Left ventricle myocardium superior (tissue), 1 donor: ENCODE measurements at regions of chr12 and their contacts with region 1.

Region 1: DNA sequence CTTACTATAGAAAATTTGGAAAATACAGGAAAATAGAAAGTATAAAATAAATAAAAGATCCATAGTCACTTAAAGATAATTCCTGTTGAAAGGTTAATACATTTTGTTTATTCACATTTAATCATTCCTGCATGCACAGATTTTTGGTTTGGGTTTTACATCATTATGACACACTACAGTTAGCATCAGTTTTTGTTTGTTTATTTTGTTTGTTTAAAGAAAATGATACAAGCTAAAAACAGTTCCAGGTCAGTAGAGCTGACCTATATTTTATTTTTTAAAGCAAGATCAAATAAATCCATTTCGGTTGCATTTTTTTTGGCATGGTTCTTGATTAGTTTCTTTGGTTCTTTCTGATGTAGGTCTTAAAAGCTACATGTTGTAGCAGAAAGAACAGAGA is 68.8 kb upstream of the CCDC91 start:
- DNase-seq: no peak
- ATAC-seq: no peak

Region 2: DNA sequence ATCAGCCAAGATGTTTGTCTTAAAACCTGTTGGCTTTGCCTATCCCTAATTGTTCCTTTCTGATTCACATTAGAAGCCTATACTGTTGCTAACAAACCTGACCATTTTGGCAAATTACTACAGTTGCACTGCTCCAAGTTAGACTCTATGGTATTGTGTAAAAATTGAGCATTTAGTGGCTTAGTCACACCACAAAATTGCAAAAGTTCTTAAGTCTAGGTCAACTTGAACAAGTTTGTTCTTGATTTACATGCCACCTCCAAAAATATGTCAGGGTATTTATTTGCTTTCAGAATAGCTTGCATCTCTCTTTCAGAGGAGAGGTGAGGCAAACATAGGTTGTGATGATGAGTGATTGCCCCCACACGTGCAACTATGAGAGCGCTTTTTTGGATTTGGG is 121.9 kb before region 1 on chr12:
- intact Hi-C with region 1: loop called (anchors 5 kb)
- DNase-seq: no peak
- ATAC-seq: no peak

Region 3: GRCh38 chr12:28369483-28369882 is 248.1 kb after region 1 on chr12:
- intact Hi-C with region 1: no loop called
- DNase-seq: no peak
- ATAC-seq: no peak

Region 4: GRCh38 chr12:28415755-28416154 is 294.3 kb after region 1 on chr12:
- intact Hi-C with region 1: no loop called
- DNase-seq: no peak
- ATAC-seq: no peak

Region 5: DNA sequence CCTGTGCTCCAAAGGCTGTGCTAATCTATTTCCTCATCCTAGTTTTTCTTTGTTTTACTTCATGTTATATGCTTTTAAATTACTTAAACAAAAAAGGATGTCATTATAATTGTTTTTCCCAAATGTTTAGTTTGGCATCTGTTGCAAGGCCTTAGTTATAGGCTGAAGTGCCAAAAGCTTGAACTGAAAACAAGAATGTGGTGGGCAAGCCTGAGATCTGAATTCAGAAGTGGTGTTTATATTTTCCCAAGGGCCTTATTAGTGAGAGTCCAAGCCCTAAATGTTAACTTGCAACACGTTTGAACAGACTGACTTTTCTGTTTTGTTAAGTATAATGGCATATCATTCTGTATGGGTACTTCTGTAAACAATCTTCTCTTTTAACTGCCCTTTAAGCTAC is 395.7 kb after region 1 on chr12:
- intact Hi-C with region 1: no loop called
- DNase-seq: no peak
- ATAC-seq: no peak